Activated CD4-positive, alpha-beta T cell treated with anti-CD3 and anti-CD28 coated beads, Interleukin-2, amount 10 ng/mL, durations not matched to agents 24 days and 14 days (primary cell): ENCODE measurements at regions of chr2 and their contacts with region 1.

Region 1: DNA sequence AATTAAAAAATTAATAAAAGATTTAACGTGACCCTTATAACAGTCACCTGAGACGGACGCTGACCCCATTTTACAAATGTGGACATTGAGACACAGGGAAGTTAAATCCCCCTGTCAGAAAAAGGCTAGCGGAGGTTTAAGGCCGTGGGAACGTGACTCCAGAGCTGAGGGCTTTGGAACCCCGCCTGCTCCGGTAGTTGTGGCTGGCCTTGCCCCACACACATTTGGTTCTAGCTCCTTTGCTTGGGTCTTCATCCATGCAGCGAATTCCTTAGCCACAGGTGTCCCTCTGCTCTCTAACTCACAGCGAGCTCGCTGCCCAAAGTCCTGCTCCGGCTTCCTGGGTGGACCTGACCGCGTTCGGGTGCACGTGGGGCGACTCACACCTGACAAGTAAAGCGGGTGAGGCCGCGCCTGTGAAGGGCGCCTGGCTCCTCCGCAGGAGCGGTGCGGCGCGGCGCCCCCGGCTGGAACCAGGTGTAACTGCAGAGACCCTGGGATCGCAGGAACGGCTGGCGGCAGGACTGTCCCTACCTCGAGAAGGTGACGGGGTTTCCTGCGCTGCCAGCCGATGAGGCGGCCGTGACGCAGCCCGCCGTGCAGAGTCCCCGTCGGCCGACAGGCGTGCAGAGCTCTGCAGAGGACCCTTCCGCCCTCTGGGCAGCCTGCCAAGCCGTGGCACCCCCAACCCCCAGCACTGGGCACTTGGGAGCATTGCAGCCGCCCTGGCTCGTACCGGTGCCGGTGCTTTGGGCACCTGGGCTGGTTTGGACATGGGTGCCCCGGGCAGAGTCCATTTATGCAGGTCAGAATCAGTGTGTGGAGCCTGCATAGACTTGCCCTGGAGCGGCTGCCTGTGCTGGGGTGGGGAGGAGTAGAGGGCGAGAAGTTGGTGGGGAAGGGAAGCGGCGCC is 2.4 kb upstream of the PROC start:
- DNase-seq: peak; percentile 92
- H3K4me3 Mint-ChIP-seq: peak overlapping the region; percentile 81
- H3K27ac Mint-ChIP-seq: peak overlapping the region; percentile 56
- H3K4me1 Mint-ChIP-seq: peaks cover 30% of the 10 kb centered on the region
- H3K27me3 Mint-ChIP-seq: peaks cover 26% of the 10 kb centered on the region

Region 2: DNA sequence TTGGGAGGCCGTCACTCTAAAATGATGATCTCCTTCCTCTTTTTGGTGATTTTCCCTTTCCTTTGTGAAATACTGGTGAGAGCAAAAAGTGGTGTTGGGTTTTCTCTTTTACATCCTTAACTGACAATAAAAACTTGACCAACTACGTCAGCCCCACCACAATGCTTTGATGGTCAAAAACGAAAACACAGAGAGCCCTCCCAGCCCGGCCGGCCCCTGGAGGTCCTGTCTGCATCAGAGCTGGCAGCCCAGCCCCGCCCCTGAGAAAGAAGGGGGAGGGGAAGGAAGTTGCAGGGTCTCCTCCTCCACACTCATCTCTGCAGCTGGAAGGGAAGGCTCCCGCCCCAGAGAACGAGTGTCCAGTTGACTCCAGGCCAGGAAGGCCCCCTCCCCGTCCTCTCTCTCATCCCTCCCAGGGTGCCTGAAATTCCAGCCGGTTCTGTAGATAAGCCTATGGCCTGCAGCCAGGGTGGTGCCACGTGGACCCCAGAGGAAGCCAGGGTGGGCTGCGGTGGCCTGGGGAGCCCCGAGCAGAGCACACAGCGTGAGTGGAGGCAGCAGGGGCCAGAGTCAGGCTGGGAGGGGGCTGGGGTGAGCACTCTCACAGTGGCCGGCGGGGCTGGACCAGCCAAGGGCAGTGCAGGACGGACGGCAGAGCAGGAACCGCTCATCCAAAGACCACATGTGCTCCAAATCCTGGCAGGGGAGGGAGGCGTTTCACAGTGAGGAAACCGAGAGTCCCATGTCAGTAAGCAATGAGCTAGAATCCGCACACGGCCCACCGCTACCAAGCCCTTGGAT is 328.7 kb before region 1 on chr2:
- intact Hi-C with region 1: loop called (anchors 10 kb)
- DNase-seq: no peak
- H3K4me3 Mint-ChIP-seq: no peak overlapping the region
- H3K27ac Mint-ChIP-seq: no peak overlapping the region
- H3K4me1 Mint-ChIP-seq: peaks cover 27% of the 10 kb centered on the region
- H3K27me3 Mint-ChIP-seq: peaks cover 7% of the 10 kb centered on the region

Region 3: DNA sequence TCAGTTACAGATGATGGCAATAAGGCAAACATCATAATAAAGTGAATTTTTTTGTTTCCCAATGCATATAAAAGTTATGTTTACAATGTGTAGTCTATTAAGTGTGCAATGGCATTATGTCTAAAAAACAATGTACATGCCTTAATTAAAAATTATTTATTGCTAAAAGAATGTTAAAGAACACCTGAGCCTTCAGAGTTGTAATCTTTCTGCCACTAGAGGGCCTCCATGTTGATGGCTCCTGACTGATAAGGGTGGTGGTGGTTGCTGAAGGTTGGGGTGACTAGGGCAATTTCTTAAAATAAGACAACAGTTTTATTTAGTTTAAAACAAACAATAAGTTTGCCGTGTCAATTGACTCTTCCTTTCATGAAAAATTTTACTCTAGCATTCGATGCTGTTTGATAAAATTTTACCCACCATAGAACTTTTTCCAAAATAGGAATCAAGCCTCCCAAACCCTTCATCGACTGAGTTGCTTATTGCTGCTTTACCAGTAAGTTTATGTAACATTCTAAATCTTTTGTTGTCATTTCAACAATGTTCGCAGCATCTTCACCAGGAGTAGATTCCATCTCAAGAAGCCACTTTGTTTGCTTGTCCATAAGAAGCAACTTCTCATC is 60.4 kb before region 1 on chr2:
- intact Hi-C with region 1: loop called (anchors 2 kb)
- DNase-seq: peak; percentile 76
- H3K4me3 Mint-ChIP-seq: no peak overlapping the region
- H3K27ac Mint-ChIP-seq: no peak overlapping the region
- H3K4me1 Mint-ChIP-seq: peaks cover 21% of the 10 kb centered on the region
- H3K27me3 Mint-ChIP-seq: no peaks in the 10 kb centered on the region

Region 4: DNA sequence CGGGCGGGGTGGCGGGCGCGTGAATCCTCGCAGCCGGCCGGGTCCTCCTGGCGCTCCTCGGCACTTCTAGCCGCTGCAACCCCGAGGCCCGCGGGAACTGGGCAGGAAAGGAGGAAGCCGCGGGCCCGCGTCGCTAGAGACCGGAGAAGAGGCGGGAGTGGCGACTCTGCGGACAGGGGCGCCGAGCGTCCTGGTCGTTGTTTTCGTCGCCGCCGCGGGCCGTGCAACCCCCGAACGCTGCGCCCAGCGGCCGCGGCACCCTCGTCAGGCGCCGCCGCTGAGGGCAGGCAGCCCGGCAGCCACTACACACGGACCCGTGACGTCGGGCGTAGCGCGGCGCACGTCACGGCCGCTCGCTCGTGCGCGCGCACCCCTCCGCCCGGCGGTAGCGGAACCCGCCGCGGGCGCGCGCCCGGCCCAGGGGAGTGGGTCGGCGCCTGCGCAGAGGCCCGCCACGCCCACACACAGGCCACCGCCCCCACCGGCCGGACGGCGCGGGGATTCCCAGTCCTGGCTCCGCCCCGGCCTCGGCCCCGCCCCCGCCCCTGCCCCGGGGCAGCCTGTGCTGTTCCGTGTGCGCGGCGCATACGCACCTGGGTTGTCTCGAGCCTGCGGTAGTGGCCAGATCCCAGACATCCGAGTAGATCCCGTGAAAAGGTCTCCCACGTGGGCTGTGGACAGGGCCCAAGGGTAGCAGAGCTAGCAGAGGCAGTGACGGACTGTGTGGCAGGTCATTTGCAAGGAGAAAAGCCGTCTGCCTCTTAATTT is 28.0 kb before region 1 on chr2 and contains the start of gene MAP3K2:
- intact Hi-C with region 1: loop called (anchors 1 kb)
- DNase-seq: peak; percentile 98
- H3K4me3 Mint-ChIP-seq: peak within 1 kb of the TSS; percentile 88
- H3K27ac Mint-ChIP-seq: peak within 1 kb of the TSS; percentile 98
- H3K4me1 Mint-ChIP-seq: peaks cover 63% of the 10 kb centered on the region
- H3K27me3 Mint-ChIP-seq: no peaks in the 10 kb centered on the region
- total RNA-seq, gene MAP3K2: 53.7 and 57.5 TPM in 2 replicates